ENCODE measurements at regions of chr12 and their contacts with region 1.

Region 1: GRCh38 chr12:31959161-31959700 is at the start of gene RESF1:
- DNase-seq: peak; percentile 92
- H3K4me3 Mint-ChIP-seq: peak within 1 kb of the TSS; percentile 91
- H3K27ac Mint-ChIP-seq: peak within 1 kb of the TSS; percentile 98
- H3K4me1 Mint-ChIP-seq: peaks cover 65% of the 10 kb centered on the region
- H3K27me3 Mint-ChIP-seq: no peaks in the 10 kb centered on the region
- total RNA-seq, gene RESF1: 152 to 154 TPM

Region 2: GRCh38 chr12:31651893-31652521 is 307.2 kb before region 1 on chr12:
- CTCF ChIA-PET with region 1: interaction called, 8 read pairs
- POLR2A ChIA-PET with region 1: interaction called, 12 read pairs
- DNase-seq: no peak
- H3K4me3 Mint-ChIP-seq: no peak overlapping the region
- H3K27ac Mint-ChIP-seq: no peak overlapping the region
- H3K4me1 Mint-ChIP-seq: peaks cover 12% of the 10 kb centered on the region
- H3K27me3 Mint-ChIP-seq: no peaks in the 10 kb centered on the region

Region 3: DNA sequence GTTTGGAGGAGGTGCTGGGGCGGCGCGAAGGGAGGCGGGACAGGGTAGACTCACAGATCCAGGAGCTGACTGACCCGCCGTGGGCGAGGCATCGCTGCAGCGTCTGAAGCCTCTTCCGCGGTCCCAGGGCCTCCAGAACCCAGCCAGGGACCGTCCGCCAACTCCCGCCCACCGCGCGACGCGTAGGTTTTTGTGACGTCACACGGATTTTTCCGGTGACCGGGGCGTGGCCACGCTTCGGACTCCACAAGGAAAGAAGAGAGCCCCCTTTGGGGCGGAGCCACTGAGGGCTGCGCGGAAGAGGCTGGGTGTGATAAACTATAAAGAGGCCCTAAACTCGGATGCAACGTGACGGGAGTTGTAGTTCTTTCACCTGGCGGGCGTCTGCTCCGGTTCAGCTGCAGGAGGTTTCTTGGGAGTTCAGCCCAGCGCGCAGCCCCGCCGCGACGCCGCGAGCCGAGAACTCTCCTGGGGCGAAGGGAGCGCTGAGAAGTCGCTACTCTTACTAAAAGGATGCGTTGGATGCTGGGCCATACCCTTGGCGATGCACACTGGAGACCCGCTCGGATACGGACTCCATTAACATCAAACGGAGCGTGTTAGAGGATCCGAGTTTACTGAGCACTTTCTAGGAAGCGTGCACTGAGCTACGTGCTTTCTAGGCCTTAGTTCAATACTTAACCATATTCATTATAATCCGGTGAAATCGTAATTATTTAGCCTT is 230.2 kb before region 1 on chr12 and contains the start of gene AMN1:
- CTCF ChIA-PET with region 1: interaction called, 7 read pairs
- POLR2A ChIA-PET with region 1: interaction called, 32 read pairs
- DNase-seq: peak; percentile 100
- H3K4me3 Mint-ChIP-seq: peak within 1 kb of the TSS; percentile 95
- H3K27ac Mint-ChIP-seq: peak within 1 kb of the TSS; percentile 99
- H3K4me1 Mint-ChIP-seq: peaks cover 51% of the 10 kb centered on the region
- H3K27me3 Mint-ChIP-seq: no peaks in the 10 kb centered on the region
- total RNA-seq, gene AMN1: 3.2 to 4.0 TPM

Region 4: DNA sequence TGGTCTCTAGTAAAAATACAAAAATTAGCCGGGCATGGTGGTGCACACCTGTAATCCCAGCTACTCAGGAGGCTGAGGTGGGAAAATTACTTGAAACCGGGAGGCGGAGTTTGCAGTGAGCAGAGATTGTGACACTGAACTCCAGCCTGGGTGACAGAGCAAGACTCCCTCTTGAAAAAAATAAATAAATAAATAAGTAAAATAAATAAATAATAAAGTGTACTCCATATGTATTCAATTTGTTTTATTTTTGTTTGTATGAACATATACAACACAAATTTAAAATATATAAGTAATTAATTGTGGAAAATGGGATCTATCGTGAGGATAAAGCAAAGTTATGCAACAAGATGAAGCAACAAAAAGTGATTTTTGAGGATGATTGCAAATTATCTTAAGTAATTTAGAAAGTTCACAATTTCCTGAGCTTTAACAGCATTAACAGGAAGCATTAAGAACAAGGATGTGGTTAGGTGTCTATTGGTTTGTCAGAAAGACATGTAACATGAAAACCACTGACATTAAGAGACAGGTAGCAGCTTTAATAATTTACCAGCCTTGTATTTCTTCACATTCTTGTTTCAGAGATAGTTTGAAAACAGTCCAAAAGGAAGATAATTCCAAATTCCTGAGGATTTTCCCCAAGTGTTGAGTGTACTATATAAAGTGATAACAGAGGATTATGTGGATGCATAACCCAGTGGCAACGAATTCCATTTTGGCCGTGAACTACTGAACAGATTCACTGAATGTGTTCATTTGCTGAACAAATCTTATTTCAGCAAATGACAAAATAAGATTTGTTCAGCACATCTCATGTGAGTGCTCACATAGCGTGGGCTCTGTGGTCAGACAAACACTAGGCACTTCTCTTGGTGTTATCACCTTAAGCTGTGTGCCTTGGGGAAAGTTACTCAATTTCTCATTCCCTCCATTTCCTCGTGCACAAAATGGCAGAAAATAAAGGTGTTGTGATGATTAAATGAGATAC is 68.6 kb before region 1 on chr12:
- CTCF ChIA-PET with region 1: interaction called, 3 read pairs
- POLR2A ChIA-PET with region 1: interaction called, 74 read pairs
- DNase-seq: peak; percentile 20
- H3K4me3 Mint-ChIP-seq: peak overlapping the region; percentile 18
- H3K27ac Mint-ChIP-seq: peak overlapping the region; percentile 90
- H3K4me1 Mint-ChIP-seq: peaks cover 51% of the 10 kb centered on the region
- H3K27me3 Mint-ChIP-seq: no peaks in the 10 kb centered on the region

Region 5: GRCh38 chr12:31970199-31970598 is 11.0 kb after region 1 on chr12:
- CTCF ChIA-PET with region 1: no interaction called
- POLR2A ChIA-PET with region 1: interaction called, 13 read pairs
- DNase-seq: no peak
- H3K4me3 Mint-ChIP-seq: no peak overlapping the region
- H3K27ac Mint-ChIP-seq: no peak overlapping the region
- H3K4me1 Mint-ChIP-seq: peaks cover 42% of the 10 kb centered on the region
- H3K27me3 Mint-ChIP-seq: no peaks in the 10 kb centered on the region

Region 6: DNA sequence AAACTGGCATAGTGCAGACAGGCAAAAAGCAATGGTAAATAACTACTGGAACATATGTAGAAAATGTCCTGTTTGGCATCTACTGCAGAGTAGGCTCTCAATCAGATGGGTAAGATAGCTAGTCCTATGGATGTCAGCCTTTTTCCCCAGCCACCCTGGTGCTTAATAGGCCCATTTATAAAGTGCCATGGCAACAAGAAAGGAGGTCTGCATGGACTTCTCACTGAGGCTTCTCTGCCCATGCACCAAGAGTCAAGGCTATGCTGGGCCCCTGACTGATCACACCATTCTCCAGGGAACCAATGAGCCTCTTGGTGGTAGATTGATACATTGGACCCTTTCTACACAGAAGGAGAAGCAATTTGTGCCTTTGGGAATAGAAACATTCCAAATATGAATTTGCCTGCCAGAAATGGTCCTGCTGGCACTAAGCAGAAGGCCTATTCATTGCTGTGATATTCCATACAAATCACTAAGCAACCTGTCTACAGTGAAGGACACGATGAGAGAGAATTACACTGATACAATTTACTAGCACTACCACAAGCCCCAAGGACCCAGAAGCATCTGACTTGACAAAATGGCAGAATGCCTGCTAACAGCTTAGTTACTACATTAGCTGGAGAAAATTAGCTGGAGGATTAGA is 43.7 kb after region 1 on chr12:
- CTCF ChIA-PET with region 1: no interaction called
- POLR2A ChIA-PET with region 1: interaction called, 11 read pairs
- DNase-seq: no peak
- H3K4me3 Mint-ChIP-seq: no peak overlapping the region
- H3K27ac Mint-ChIP-seq: no peak overlapping the region
- H3K4me1 Mint-ChIP-seq: no peaks in the 10 kb centered on the region
- H3K27me3 Mint-ChIP-seq: no peaks in the 10 kb centered on the region

Region 7: GRCh38 chr12:32198555-32198954 is 239.3 kb after region 1 on chr12:
- CTCF ChIA-PET with region 1: no interaction called
- POLR2A ChIA-PET with region 1: no interaction called
- DNase-seq: no peak
- H3K4me3 Mint-ChIP-seq: no peak overlapping the region
- H3K27ac Mint-ChIP-seq: no peak overlapping the region
- H3K4me1 Mint-ChIP-seq: peaks cover 13% of the 10 kb centered on the region
- H3K27me3 Mint-ChIP-seq: no peaks in the 10 kb centered on the region